ENCODE measurements at regions of chr6 and their contacts with region 1.

Region 1: DNA sequence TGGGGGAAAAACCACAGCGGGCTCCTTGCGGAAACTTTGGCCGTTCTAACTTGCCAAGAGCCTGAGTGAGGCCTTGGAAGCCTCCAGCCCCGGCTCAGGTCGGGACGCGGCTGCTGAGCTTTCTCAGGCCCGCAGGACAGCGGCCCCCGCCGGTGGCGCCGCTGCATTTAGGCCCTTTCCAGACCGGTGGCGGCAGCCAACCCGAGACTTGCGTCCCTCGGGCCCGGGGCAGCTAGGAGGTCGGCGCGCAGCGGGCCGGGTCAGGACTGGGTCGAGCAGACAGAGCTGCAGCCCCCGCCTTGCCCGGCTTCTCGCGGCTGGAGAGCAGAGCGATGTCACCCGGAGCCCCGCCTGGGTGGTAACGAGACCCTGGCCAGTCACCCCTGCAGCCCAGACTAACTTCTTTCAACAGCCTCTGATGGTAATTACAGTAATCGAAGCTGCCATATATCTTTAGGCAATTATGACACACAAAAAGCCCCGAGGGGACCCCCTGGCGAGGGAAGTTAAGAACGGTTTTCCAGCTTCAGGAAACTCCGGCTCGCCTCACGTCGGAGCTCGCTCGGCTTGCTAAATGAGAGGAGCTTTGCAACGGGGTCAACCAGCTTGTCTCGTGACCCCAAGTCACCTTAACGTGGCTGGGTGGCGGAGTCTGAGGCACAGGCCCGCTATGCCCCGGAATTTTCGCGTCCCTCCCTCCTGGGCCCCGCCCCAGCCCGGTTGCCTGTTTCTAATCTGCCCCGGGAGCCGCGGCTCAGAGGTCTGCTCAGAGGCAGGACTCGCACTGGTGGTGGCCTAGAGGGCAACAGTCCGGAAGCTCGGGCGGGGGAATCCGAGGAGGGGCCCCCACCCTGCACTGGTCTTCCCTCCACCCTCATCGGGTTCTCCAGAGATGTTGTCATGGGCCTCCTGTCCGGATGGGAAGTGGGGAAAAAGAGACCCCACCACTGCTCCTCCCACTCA is 3.0 kb downstream of the NR2E1 start:
- DNase-seq: no peak
- H3K4me3 ChIP-seq: peak overlapping the region; percentile 1 to 36
- H3K27ac ChIP-seq: no peak overlapping the region
- H3K4me1 ChIP-seq: peaks cover 57% of the 10 kb centered on the region
- H3K27me3 ChIP-seq: peaks cover 41% of the 10 kb centered on the region
- CTCF ChIP-seq: no peak
- POLR2A ChIP-seq: no peak

Region 2: GRCh38 chr6:107977283-107977682 is 191.5 kb before region 1 on chr6:
- intact Hi-C with region 1: loop called (anchors 5 kb)
- DNase-seq: no peak
- H3K4me3 ChIP-seq: no peak overlapping the region
- H3K27ac ChIP-seq: no peak overlapping the region
- H3K4me1 ChIP-seq: no peaks in the 10 kb centered on the region
- H3K27me3 ChIP-seq: no peaks in the 10 kb centered on the region
- CTCF ChIP-seq: peak in 1 of 3 experiments; percentile 24
- POLR2A ChIP-seq: no peak

Region 3: DNA sequence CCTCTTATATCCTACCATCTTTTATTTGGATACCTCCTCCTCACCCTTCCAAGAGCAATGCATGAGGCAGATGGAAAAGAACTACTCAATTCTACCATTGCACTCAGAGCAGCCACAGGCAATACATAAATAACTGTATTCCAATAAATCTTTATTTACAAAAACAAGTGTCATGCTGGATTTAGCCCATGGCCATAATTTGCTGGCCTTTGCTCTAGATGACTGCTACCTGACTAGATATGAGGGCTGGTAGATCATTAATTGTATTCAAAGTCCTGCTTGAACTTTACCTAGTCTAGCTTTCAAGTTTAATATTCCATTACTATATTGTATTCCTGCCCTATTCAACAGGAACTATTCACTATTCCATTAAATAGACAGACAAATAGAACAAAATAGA is 163.2 kb after region 1 on chr6:
- intact Hi-C with region 1: no loop called
- DNase-seq: no peak
- H3K4me3 ChIP-seq: no peak overlapping the region
- H3K27ac ChIP-seq: no peak overlapping the region
- H3K4me1 ChIP-seq: no peaks in the 10 kb centered on the region
- H3K27me3 ChIP-seq: no peaks in the 10 kb centered on the region
- CTCF ChIP-seq: no peak
- POLR2A ChIP-seq: no peak

Region 4: GRCh38 chr6:110020888-110021287 is 1852.1 kb after region 1 on chr6:
- intact Hi-C with region 1: no loop called
- DNase-seq: no peak
- H3K4me3 ChIP-seq: no peak overlapping the region
- H3K27ac ChIP-seq: no peak overlapping the region
- H3K4me1 ChIP-seq: no peaks in the 10 kb centered on the region
- H3K27me3 ChIP-seq: no peaks in the 10 kb centered on the region
- CTCF ChIP-seq: no peak
- POLR2A ChIP-seq: no peak

Measured in vagina (tissue), 2 donors.